ENCODE measurements at regions of chr11 and their contacts with region 1.

Region 1: DNA sequence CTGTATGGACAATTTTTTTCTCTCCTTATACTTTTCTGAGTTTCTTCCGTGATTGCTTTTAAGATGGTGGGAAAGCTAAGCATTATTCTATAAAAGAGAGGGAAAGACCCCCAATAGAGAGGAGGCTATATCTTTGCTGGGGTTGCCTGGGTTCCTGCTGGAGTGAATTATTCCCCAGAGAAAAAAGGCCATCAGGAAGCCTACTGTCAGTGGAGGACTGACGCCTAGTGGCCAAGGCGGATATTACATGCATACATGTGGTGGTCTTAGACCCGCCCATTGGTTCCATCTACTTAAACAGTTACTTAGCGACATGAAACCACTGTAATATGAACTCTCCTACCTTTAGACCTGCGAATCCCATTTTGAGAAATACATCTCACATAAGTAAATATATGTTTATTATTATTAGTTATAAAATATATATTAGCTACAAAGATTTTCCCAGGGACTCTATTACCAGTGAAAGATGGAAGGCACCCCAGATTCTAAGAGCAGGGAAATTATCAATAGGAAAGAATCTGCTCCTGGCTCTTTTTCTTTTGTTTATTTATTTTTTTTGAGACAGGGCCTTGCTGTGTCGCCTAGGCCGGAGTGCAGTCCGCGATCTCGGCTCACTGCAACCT is 15.7 kb upstream of the PGA3 start:
- DNase-seq: peak; percentile 74 to 85
- H3K4me3 ChIP-seq: no peak overlapping the region
- H3K4me3 Mint-ChIP-seq: no peak overlapping the region
- H3K27ac Mint-ChIP-seq: no peak overlapping the region
- H3K4me1 ChIP-seq: no peaks in the 10 kb centered on the region
- H3K4me1 Mint-ChIP-seq: peaks cover 7% of the 10 kb centered on the region
- H3K27me3 ChIP-seq: no peaks in the 10 kb centered on the region; the same call in 1 of the 2 replicates
- H3K27me3 Mint-ChIP-seq: no peaks in the 10 kb centered on the region
- CTCF ChIP-seq: peak; percentile 95 to 98

Region 2: GRCh38 chr11:60970369-60970774 is 217.2 kb before region 1 on chr11:
- CTCF ChIA-PET with region 1: no interaction called
- POLR2A ChIA-PET with region 1: no interaction called
- intact Hi-C with region 1: loop called (anchors 1 kb)
- DNase-seq: peak in 1 of 2 experiments; percentile 65
- H3K4me3 ChIP-seq: no peak overlapping the region
- H3K4me3 Mint-ChIP-seq: no peak overlapping the region
- H3K27ac Mint-ChIP-seq: no peak overlapping the region
- H3K4me1 ChIP-seq: no peaks in the 10 kb centered on the region
- H3K4me1 Mint-ChIP-seq: no peaks in the 10 kb centered on the region
- H3K27me3 ChIP-seq: no peaks in the 10 kb centered on the region
- H3K27me3 Mint-ChIP-seq: peaks cover 3% of the 10 kb centered on the region
- CTCF ChIP-seq: peak; percentile 65 to 85

Region 3: DNA sequence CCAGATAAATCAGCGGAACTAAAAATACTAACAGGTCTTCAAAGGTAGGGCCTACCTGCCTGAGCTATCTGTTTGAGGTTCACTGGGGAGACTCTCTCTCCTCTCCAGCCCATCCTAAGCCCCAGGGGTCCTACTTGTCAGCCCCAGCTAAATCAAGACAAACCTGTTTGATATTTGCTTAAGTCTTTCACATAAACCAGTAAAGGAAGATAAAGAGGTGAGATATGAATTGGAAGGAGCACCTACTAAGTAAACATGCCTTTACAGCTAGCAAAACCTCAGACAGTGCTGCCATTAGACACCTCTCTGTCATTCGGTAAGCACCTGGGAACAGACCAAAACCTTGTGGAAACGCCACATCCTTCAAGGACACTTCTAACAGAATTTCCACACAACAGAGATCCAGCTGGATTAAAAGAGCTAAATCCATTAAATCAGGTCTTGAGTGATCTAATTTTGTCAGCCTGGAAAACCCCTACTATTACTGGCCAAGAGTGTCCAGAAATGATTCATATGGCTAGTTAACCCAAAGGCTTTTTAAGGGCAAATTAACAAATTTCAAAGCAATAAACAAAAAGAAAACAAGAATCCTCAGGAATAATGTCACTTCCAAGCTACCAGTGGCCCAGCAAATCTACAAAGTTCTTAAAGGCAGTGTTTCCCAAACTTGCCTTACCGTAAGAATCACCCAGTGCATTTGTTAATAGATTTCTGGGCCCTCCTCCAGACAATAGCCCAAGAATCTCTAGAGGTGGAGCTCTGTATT is 28.8 kb before region 1 on chr11:
- CTCF ChIA-PET with region 1: no interaction called
- POLR2A ChIA-PET with region 1: no interaction called
- intact Hi-C with region 1: loop called (anchors 1 kb)
- DNase-seq: peak; percentile 77 to 85
- H3K4me3 ChIP-seq: no peak overlapping the region
- H3K4me3 Mint-ChIP-seq: peak overlapping the region; percentile 79
- H3K27ac Mint-ChIP-seq: peak overlapping the region; percentile 92
- H3K4me1 ChIP-seq: peaks cover 63% of the 10 kb centered on the region
- H3K4me1 Mint-ChIP-seq: peaks cover 55% of the 10 kb centered on the region
- H3K27me3 ChIP-seq: no peaks in the 10 kb centered on the region
- H3K27me3 Mint-ChIP-seq: no peaks in the 10 kb centered on the region
- CTCF ChIP-seq: no peak

Measured in Caco-2 (cell line).